ENCODE measurements at regions of chr1 and their contacts with region 1.

Region 1: DNA sequence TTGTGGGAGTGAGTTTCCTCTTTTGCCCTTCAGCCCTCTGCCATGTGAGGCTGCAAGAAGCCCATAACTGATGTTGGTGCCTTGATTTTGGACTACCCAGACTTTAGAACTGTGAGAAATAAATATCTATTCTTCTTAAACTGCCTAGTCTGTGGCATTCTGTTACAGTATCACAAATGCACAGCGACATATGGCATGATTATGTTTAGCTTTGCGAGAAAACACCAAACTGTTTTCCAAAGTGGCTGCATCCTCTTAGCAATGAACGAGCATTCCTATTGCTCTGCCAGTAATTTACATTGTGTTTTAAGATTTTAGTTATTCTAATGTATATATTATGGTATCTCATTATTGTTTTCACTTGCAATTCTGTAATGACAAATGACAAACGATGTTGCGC is 246.7 kb downstream of the HLX start:
- DNase-seq: no peak
- H3K4me3 ChIP-seq: no peak overlapping the region
- H3K27ac ChIP-seq: no peak overlapping the region
- H3K27me3 ChIP-seq: no peaks in the 10 kb centered on the region
- CTCF ChIP-seq: no peak

Region 2: GRCh38 chr1:220241072-220241663 is 884.8 kb before region 1 on chr1:
- intact Hi-C with region 1: no loop called
- DNase-seq: no peak
- H3K4me3 ChIP-seq: no peak overlapping the region
- H3K27ac ChIP-seq: no peak overlapping the region
- H3K27me3 ChIP-seq: no peaks in the 10 kb centered on the region
- CTCF ChIP-seq: no peak

Region 3: DNA sequence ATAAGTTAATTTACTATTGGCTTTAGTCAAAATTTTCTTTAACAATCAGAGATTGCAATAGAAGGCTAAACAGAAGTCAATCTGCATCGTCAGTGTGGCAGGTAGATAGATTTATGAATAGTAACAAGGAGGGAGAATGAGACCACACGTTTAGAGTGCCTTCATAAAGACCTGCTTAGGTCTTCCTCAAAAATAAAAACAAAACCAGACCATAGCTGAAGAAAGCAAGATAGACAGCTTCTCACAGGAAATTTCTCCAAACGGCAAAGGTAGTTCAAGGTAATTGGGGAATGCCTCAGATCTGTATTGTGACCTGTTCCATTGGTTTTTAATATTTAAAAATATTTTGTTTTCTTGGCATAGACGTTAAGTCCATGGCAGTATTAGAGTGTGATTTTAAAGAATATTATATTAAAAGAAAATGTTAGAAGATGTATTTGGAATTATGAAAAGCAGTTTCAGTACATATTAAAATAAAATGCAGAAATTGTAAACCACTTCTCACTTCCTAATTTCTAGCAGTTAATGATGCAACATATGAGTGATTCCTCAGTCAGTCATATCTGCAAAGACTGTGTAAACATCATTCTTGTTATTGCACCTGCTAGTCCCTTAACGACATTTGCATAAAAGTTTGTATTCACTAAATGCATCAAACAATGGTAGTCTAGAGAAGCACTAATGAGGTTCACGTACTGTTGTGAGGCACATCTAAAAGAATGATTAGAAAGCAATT is 31.2 kb after region 1 on chr1:
- intact Hi-C with region 1: loop called in 1 of 2 experiments (anchors 2 kb)
- DNase-seq: no peak
- H3K4me3 ChIP-seq: no peak overlapping the region
- H3K27ac ChIP-seq: no peak overlapping the region
- H3K27me3 ChIP-seq: no peaks in the 10 kb centered on the region
- CTCF ChIP-seq: no peak

Region 4: DNA sequence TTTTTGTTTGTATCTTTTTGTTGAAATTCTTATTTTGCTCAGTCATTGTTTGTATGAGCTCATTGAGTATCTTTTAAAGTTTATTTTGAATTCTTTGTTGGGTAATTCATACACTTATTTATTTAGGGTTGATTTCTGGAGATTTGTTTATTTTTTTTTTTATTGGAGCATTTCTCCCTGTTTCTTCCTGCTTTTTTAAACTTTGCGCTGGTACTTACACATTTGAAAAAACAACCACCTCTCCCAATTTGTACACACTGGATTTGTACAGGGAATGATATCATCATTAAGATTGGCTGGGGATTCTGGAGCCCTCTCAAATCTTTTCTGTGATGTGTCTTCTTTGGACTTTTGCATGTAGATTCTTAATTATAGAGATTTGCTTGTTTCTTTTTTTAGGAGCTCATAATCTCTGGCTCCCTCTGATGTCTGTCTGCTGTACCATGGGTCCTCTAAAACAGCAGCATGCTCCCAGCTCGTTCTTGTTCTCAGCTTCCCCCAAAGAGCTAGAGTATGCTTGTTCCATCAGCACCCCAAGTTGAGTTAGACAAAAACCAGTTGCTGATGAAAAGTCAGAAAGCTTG is 305.2 kb after region 1 on chr1:
- intact Hi-C with region 1: no loop called
- DNase-seq: no peak
- H3K4me3 ChIP-seq: no peak overlapping the region
- H3K27ac ChIP-seq: no peak overlapping the region
- H3K27me3 ChIP-seq: no peaks in the 10 kb centered on the region
- CTCF ChIP-seq: peak in 10 of 56 donors; percentile 8 to 38 (median 32)